ENCODE measurements at regions of chr12 and their contacts with region 1.

Region 1: GRCh38 chr12:89529738-89530137 is 3.9 kb upstream of the POC1B start:
- DNase-seq: no peak
- ATAC-seq: no peak
- H3K4me3 ChIP-seq: no peak overlapping the region
- H3K27ac ChIP-seq: no peak overlapping the region
- H3K4me1 ChIP-seq: peaks cover 12 to 17% of the 10 kb centered on the region in 2 donors
- H3K27me3 ChIP-seq: no peaks in the 10 kb centered on the region
- CTCF ChIP-seq: peak; percentile 13 to 73 (median 60)
- POLR2A ChIP-seq: no peak

Region 2: GRCh38 chr12:89019408-89020120 is 510.2 kb before region 1 on chr12:
- in situ Hi-C with region 1: loop called in 2 of 4 experiments (anchors 5 to 10 kb)
- intact Hi-C with region 1: loop called (anchors 2 kb)
- DNase-seq: peak; percentile 55 to 59
- ATAC-seq: peak; percentile 90 to 92
- H3K4me3 ChIP-seq: peak overlapping the region; percentile 21 to 42 (median 36)
- H3K27ac ChIP-seq: no peak overlapping the region
- H3K4me1 ChIP-seq: peaks cover 0 to 6% of the 10 kb centered on the region in 2 donors
- H3K27me3 ChIP-seq: no peaks in the 10 kb centered on the region
- CTCF ChIP-seq: peak; percentile 48 to 83 (median 77)
- POLR2A ChIP-seq: no peak